PC-3 (cell line): ENCODE measurements at regions of chr14 and their contacts with region 1.

Region 1: GRCh38 chr14:55707365-55707804 is 127.4 kb downstream of the KTN1 start:
- DNase-seq: peak; percentile 91
- ATAC-seq: peak; percentile 72
- H3K4me3 ChIP-seq: no peak overlapping the region
- H3K27ac ChIP-seq: no peak overlapping the region
- H3K4me1 ChIP-seq: peaks cover 19% of the 10 kb centered on the region
- H3K27me3 ChIP-seq: no peaks in the 10 kb centered on the region
- CTCF ChIP-seq: peak; percentile 99

Region 2: GRCh38 chr14:55438066-55438683 is 269.2 kb before region 1 on chr14:
- CTCF ChIA-PET with region 1: interaction called, 14 read pairs
- POLR2A ChIA-PET with region 1: no interaction called
- intact Hi-C with region 1: loop called (anchors 1 kb)
- DNase-seq: peak; percentile 92
- ATAC-seq: peak; percentile 73
- H3K4me3 ChIP-seq: no peak overlapping the region
- H3K27ac ChIP-seq: no peak overlapping the region
- H3K4me1 ChIP-seq: peaks cover 21% of the 10 kb centered on the region
- H3K27me3 ChIP-seq: no peaks in the 10 kb centered on the region
- CTCF ChIP-seq: peak; percentile 99

Region 3: GRCh38 chr14:55807059-55807499 is 99.7 kb after region 1 on chr14:
- CTCF ChIA-PET with region 1: no interaction called
- POLR2A ChIA-PET with region 1: no interaction called
- intact Hi-C with region 1: loop called (anchors 1 kb)
- DNase-seq: peak; percentile 87
- ATAC-seq: peak; percentile 42
- H3K4me3 ChIP-seq: no peak overlapping the region
- H3K27ac ChIP-seq: peak overlapping the region; percentile 60
- H3K4me1 ChIP-seq: peaks cover 40% of the 10 kb centered on the region
- H3K27me3 ChIP-seq: no peaks in the 10 kb centered on the region
- CTCF ChIP-seq: no peak

Region 4: DNA sequence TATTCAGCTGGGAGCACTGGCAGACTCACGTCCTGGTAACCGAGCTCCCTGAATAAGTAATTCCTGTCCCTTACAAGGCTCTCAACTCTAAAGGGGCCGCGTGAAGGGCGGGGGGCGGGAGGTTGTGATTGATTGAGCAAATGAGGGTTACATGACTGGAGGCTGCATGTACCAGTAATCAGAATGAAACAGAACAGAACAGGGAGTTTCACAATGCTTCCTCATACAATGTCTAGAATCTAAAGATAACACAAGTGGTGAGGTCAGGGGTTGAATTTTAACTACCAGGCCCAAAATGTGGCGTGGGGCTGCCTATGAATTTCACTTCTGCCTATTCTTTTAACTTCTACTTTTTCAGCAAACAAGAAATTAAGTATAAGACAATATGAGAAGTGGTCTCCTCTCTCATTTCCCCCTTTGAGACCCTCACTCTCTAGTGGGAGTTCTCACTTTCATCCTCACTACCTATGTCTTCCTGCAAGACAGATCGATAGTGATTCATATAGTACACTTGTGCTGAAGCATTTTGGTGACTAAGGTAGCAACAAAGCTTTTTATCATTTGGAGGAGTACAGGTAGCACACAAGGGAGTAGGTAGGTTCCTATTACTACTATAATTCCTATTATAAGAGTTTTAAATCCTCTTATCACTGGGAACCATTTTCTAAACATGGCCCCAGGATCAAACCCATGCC is 112.4 kb after region 1 on chr14:
- CTCF ChIA-PET with region 1: no interaction called
- POLR2A ChIA-PET with region 1: no interaction called
- intact Hi-C with region 1: no loop called
- DNase-seq: no peak
- ATAC-seq: no peak
- H3K4me3 ChIP-seq: no peak overlapping the region
- H3K27ac ChIP-seq: no peak overlapping the region
- H3K4me1 ChIP-seq: peaks cover 4% of the 10 kb centered on the region
- H3K27me3 ChIP-seq: no peaks in the 10 kb centered on the region
- CTCF ChIP-seq: no peak

Region 5: DNA sequence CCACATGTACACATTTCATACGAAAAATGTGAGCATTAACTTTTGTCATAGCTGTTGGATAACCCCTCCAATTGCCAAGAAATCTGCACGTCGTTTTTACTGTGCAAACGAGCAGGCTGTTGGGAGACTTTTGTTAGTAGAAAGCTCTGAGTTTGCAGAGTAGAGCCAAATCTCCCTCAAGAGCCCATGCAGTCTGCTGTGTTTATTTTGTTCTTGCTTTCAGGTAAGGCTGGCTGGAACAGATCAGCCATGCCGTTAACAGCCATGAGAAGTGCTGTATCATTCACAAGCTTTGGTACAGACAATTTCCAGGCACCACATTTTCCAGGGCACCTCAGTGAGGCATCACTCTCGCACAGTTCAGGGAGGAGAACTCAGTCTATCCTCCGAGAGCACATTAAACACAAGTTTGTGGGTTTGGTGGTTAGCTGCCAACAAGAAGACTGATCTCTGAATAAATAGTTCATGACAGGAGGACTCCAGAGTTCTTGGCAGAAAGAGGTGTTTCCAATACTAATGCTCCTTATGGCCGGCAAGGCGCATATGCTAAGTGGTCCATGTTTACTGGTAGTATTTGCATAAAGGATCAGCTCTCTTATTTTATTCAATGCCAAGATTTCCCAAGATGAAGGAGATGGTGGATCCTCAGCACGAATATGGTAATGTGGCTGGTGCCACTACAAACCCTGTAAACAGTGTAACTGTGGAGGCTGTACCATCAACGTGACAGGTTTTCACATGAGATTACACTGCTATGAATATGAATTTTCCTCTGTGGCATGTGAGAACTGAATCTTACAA is 380.5 kb after region 1 on chr14:
- CTCF ChIA-PET with region 1: no interaction called
- POLR2A ChIA-PET with region 1: no interaction called
- intact Hi-C with region 1: loop called (anchors 1 kb)
- DNase-seq: no peak
- ATAC-seq: no peak
- H3K4me3 ChIP-seq: no peak overlapping the region
- H3K27ac ChIP-seq: no peak overlapping the region
- H3K4me1 ChIP-seq: no peaks in the 10 kb centered on the region
- H3K27me3 ChIP-seq: peaks cover 95% of the 10 kb centered on the region
- CTCF ChIP-seq: no peak

Region 6: GRCh38 chr14:56247468-56248200 is 540.2 kb after region 1 on chr14:
- CTCF ChIA-PET with region 1: no interaction called
- POLR2A ChIA-PET with region 1: no interaction called
- intact Hi-C with region 1: loop called (anchors 10 kb)
- DNase-seq: peak; percentile 74
- ATAC-seq: peak; percentile 46; the same call in 1 of the 2 replicates
- H3K4me3 ChIP-seq: no peak overlapping the region
- H3K27ac ChIP-seq: no peak overlapping the region
- H3K4me1 ChIP-seq: peaks cover 11% of the 10 kb centered on the region
- H3K27me3 ChIP-seq: peaks cover 40% of the 10 kb centered on the region
- CTCF ChIP-seq: peak; percentile 94

Region 7: DNA sequence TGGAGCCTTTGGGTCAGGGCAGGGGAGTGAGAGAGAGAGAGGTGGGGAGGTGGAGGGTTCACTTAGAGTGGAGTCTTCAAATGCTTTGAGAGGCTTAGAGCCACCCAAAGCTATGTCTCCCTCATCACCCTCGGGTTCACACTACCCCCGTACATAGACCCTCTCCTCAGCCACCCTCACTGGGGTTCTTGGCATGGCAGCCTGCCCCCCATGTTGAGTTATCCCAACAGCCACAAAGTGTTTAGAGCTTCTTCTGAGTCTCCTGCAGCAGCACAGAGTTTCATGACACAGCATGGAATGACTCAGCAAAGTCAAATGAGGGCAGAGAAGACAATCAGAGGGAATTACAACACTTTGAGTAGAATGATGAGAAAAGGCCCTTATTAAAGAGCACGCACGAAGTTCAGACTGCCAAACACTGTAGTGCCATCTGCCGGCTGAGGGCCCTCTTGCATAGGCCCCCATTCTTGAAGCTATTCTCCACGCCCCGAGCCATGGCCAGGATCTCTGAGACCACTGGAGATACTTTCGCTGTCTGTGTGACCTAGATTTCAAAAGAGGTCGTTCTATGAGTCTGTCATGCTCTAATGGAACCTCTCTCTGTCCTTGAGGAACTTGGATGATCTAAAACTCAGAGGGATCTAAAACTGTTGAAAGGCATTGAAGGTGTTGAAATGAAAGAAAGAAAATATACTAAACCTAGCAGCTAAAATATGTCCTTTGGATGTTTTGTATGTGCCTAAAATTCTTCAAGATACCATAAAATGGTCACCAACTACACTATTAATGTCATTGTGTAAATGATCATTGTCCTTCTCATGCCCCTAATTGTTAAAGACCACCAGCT is 632.7 kb after region 1 on chr14:
- CTCF ChIA-PET with region 1: interaction called, 9 read pairs
- POLR2A ChIA-PET with region 1: no interaction called
- intact Hi-C with region 1: loop called (anchors 1 kb)
- DNase-seq: peak; percentile 89
- ATAC-seq: peak; percentile 96
- H3K4me3 ChIP-seq: no peak overlapping the region
- H3K27ac ChIP-seq: no peak overlapping the region
- H3K4me1 ChIP-seq: peaks cover 3% of the 10 kb centered on the region; the same call in 1 of the 2 replicates
- H3K27me3 ChIP-seq: peaks cover 19% of the 10 kb centered on the region; the same call in 1 of the 2 replicates
- CTCF ChIP-seq: peak; percentile 99

Region 8: GRCh38 chr14:56474419-56475022 is 767.1 kb after region 1 on chr14:
- CTCF ChIA-PET with region 1: interaction called, 7 read pairs
- POLR2A ChIA-PET with region 1: no interaction called
- intact Hi-C with region 1: loop called (anchors 1 kb)
- DNase-seq: peak; percentile 93
- ATAC-seq: peak; percentile 71
- H3K4me3 ChIP-seq: no peak overlapping the region
- H3K27ac ChIP-seq: no peak overlapping the region
- H3K4me1 ChIP-seq: no peaks in the 10 kb centered on the region
- H3K27me3 ChIP-seq: peaks cover 69% of the 10 kb centered on the region
- CTCF ChIP-seq: peak; percentile 98